Naive thymus-derived CD4-positive, alpha-beta T cell (primary cell): ENCODE measurements at regions of chr15 and their contacts with region 1.

Region 1: DNA sequence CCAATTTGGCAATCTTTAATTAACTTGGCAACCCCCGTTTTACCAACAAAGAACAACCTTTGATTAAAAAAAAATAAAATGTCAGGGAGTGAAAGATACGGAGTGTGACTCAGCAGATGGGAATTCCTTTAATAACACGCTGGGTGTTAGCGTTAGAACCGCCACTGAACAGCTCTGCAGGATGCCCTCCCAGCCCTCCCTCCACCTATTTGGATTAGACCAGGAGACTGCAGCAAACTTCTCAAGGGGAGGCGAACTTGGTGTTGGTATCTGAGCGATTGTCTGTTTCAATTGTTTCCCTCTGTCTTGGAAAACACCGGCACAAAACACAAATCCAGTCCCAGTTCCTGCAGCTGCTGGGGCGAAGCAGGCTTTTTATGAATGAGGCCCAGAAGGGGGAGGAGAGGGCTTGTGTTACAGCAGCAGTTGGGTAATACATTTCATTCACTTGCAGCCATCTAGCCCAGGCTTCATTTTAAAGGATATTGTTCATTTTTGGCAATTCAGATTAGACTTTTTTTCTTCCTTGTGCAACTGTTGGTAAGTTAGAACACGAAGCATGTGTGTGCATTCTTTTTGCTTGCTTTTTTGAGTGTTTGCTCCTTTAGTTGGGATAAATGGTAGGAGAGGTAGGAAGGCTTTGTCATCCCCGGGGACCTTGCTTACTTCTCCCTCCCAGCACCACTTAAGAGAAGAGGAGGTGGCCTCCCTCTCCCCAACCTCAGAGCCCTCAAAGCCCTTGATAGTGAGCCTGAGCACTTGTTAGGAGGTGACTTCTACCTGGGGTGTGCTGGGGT is 152.3 kb downstream of the IGF1R start:
- DNase-seq: no peak
- ATAC-seq: peak; percentile 48
- H3K4me3 ChIP-seq: no peak overlapping the region
- H3K4me3 Mint-ChIP-seq: peak overlapping the region in 9 of 10 donors; percentile 57 to 83 (median 78)
- H3K27ac ChIP-seq: peak overlapping the region; percentile 30
- H3K27ac Mint-ChIP-seq: peak overlapping the region in 8 of 9 donors; percentile 40 to 90 (median 58)
- H3K4me1 ChIP-seq: peaks cover 0 to 38% of the 10 kb centered on the region in 2 donors
- H3K4me1 Mint-ChIP-seq: peaks cover 11 to 88% (median 84%) of the 10 kb centered on the region in 7 donors
- H3K27me3 ChIP-seq: no peaks in the 10 kb centered on the region
- H3K27me3 Mint-ChIP-seq: peaks cover 0 to 3% (median 0%) of the 10 kb centered on the region in 5 donors

Region 2: GRCh38 chr15:98823012-98823458 is 22.4 kb after region 1 on chr15:
- CTCF ChIA-PET with region 1: no interaction called
- POLR2A ChIA-PET with region 1: interaction called, 3 read pairs
- intact Hi-C with region 1: loop called in 1 of 2 experiments (anchors 2 kb)
- DNase-seq: no peak
- ATAC-seq: peak; percentile 57
- H3K4me3 ChIP-seq: no peak overlapping the region
- H3K4me3 Mint-ChIP-seq: no peak overlapping the region
- H3K27ac ChIP-seq: no peak overlapping the region
- H3K27ac Mint-ChIP-seq: no peak overlapping the region
- H3K4me1 ChIP-seq: no peaks in the 10 kb centered on the region
- H3K4me1 Mint-ChIP-seq: peaks cover 0 to 17% (median 6%) of the 10 kb centered on the region in 7 donors
- H3K27me3 ChIP-seq: no peaks in the 10 kb centered on the region
- H3K27me3 Mint-ChIP-seq: no peaks in the 10 kb centered on the region

Region 3: GRCh38 chr15:99019558-99020540 is 219.2 kb after region 1 on chr15:
- CTCF ChIA-PET with region 1: no interaction called
- POLR2A ChIA-PET with region 1: no interaction called
- intact Hi-C with region 1: no loop called
- DNase-seq: no peak
- ATAC-seq: no peak
- H3K4me3 ChIP-seq: no peak overlapping the region
- H3K4me3 Mint-ChIP-seq: no peak overlapping the region
- H3K27ac ChIP-seq: no peak overlapping the region
- H3K27ac Mint-ChIP-seq: no peak overlapping the region
- H3K4me1 ChIP-seq: no peaks in the 10 kb centered on the region
- H3K4me1 Mint-ChIP-seq: peaks cover 0 to 10% (median 5%) of the 10 kb centered on the region in 7 donors
- H3K27me3 ChIP-seq: no peaks in the 10 kb centered on the region
- H3K27me3 Mint-ChIP-seq: peaks cover 7 to 39% (median 23%) of the 10 kb centered on the region in 5 donors